Endothelial cell of umbilical vein (primary cell): ENCODE measurements at regions of chr3 and their contacts with region 1.

Region 1: DNA sequence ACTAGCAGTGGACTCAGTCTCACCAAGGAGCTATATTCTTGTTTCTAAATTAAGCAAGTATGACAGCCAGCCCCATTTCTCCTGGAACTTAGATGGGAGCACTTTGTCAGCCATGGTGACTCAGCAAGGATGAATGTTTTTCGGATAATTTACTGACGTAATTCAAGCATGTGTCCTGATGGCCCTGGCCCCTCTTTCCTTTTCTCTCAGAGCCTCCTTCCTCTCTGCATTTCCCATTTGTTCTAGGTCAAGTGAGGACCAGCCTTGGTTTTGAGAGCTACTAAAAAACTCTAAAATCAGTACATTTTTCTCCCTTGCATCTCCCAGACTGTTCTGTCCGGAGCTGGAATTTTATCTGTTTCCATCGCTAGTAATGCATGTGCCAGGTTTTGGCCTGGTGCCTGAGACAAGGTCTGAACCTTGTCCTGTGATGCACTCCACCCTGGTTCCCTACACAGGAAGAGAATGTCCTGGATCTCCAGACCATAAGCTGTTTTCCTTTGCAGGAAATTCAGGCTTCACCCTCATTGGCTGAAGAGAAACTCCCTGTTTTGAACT is 256.6 kb upstream of the ROPN1 start:
- DNase-seq: peak; percentile 79
- H3K4me3 ChIP-seq: no peak overlapping the region
- H3K27ac ChIP-seq: peak overlapping the region; percentile 77
- H3K4me1 ChIP-seq: peaks cover 27% of the 10 kb centered on the region
- H3K27me3 ChIP-seq: no peaks in the 10 kb centered on the region
- CTCF ChIP-seq: no peak
- POLR2A ChIP-seq: no peak

Region 2: DNA sequence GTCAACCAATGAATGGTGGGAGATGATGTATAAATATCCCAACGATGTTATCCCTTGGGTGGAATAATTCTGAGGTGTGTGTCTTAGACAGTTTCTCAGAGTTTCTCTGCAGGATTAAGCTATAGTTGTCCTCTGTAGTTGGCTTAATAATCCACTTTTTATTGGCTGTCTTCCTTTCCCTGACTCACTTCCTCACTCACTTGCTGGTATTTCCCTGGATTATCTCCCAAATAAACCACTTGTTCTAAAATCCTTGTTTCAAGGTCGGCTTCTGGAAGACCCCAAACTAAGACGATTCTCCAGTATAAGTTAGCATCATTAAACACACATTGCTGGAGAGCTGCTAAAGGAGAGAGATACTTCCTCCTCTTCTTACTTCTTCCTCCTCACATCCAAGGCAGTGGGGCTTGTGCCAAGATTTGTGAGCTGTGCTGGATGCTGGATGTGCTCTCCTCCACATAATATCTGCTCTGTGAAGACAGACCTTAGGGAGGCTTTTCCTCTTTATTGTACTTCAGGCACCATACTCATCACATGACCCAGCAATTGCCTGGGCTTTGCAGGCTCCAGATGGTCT is 234.1 kb before region 1 on chr3:
- CTCF ChIA-PET with region 1: interaction called, 6 read pairs
- POLR2A ChIA-PET with region 1: no interaction called
- dilution Hi-C with region 1: no loop called
- intact Hi-C with region 1: loop called (anchors 1 kb)
- DNase-seq: peak; percentile 23
- H3K4me3 ChIP-seq: no peak overlapping the region
- H3K27ac ChIP-seq: no peak overlapping the region
- H3K4me1 ChIP-seq: peaks cover 7% of the 10 kb centered on the region
- H3K27me3 ChIP-seq: peaks cover 0 to 5% of the 10 kb centered on the region in 2 experiments
- CTCF ChIP-seq: no peak
- POLR2A ChIP-seq: no peak

Region 3: GRCh38 chr3:124174476-124174875 is 74.1 kb before region 1 on chr3:
- CTCF ChIA-PET with region 1: no interaction called
- POLR2A ChIA-PET with region 1: no interaction called
- dilution Hi-C with region 1: no loop called
- intact Hi-C with region 1: no loop called
- DNase-seq: no peak
- H3K4me3 ChIP-seq: no peak overlapping the region
- H3K27ac ChIP-seq: no peak overlapping the region
- H3K4me1 ChIP-seq: no peaks in the 10 kb centered on the region
- H3K27me3 ChIP-seq: no peaks in the 10 kb centered on the region
- CTCF ChIP-seq: no peak
- POLR2A ChIP-seq: no peak

Region 4: GRCh38 chr3:124234852-124235252 is 13.7 kb before region 1 on chr3:
- CTCF ChIA-PET with region 1: interaction called, 3 read pairs
- POLR2A ChIA-PET with region 1: no interaction called
- dilution Hi-C with region 1: no loop called
- intact Hi-C with region 1: loop called (anchors 2 kb)
- DNase-seq: peak; percentile 47
- H3K4me3 ChIP-seq: no peak overlapping the region
- H3K27ac ChIP-seq: no peak overlapping the region
- H3K4me1 ChIP-seq: peaks cover 9% of the 10 kb centered on the region
- H3K27me3 ChIP-seq: no peaks in the 10 kb centered on the region
- CTCF ChIP-seq: no peak
- POLR2A ChIP-seq: no peak